Activated naive CD4-positive, alpha-beta T cell treated with anti-CD3 and anti-CD28 coated beads for 36 hours (primary cell): ENCODE measurements at regions of chr3 and their contacts with region 1.

Region 1: GRCh38 chr3:42443819-42444436 is 33.5 kb upstream of the LYZL4 start:
- DNase-seq: peak; percentile 89
- H3K4me3 Mint-ChIP-seq: no peak overlapping the region
- H3K27ac Mint-ChIP-seq: no peak overlapping the region
- H3K4me1 Mint-ChIP-seq: no peaks in the 10 kb centered on the region
- H3K27me3 Mint-ChIP-seq: no peaks in the 10 kb centered on the region

Region 2: GRCh38 chr3:41893977-41894376 is 550.0 kb before region 1 on chr3:
- CTCF ChIA-PET with region 1: no interaction called
- intact Hi-C with region 1: loop called (anchors 10 kb)
- DNase-seq: peak; percentile 23
- H3K4me3 Mint-ChIP-seq: no peak overlapping the region
- H3K27ac Mint-ChIP-seq: no peak overlapping the region
- H3K4me1 Mint-ChIP-seq: no peaks in the 10 kb centered on the region
- H3K27me3 Mint-ChIP-seq: no peaks in the 10 kb centered on the region

Region 3: GRCh38 chr3:42247576-42248027 is 196.3 kb before region 1 on chr3:
- CTCF ChIA-PET with region 1: interaction called, 104 read pairs
- intact Hi-C with region 1: loop called (anchors 1 kb)
- DNase-seq: peak; percentile 82
- H3K4me3 Mint-ChIP-seq: no peak overlapping the region
- H3K27ac Mint-ChIP-seq: no peak overlapping the region
- H3K4me1 Mint-ChIP-seq: peaks cover 8% of the 10 kb centered on the region
- H3K27me3 Mint-ChIP-seq: peaks cover 8% of the 10 kb centered on the region

Region 4: GRCh38 chr3:42302924-42303634 is 140.8 kb before region 1 on chr3:
- CTCF ChIA-PET with region 1: interaction called, 10 read pairs
- intact Hi-C with region 1: no loop called
- DNase-seq: no peak
- H3K4me3 Mint-ChIP-seq: no peak overlapping the region
- H3K27ac Mint-ChIP-seq: no peak overlapping the region
- H3K4me1 Mint-ChIP-seq: peaks cover 10% of the 10 kb centered on the region
- H3K27me3 Mint-ChIP-seq: peaks cover 5% of the 10 kb centered on the region

Region 5: GRCh38 chr3:42387802-42388651 is 55.9 kb before region 1 on chr3:
- CTCF ChIA-PET with region 1: interaction called, 9 read pairs
- intact Hi-C with region 1: loop called (anchors 1 kb)
- DNase-seq: peak; percentile 75
- H3K4me3 Mint-ChIP-seq: peak overlapping the region; percentile 44
- H3K27ac Mint-ChIP-seq: peak overlapping the region; percentile 96
- H3K4me1 Mint-ChIP-seq: peaks cover 25% of the 10 kb centered on the region
- H3K27me3 Mint-ChIP-seq: no peaks in the 10 kb centered on the region

Region 6: DNA sequence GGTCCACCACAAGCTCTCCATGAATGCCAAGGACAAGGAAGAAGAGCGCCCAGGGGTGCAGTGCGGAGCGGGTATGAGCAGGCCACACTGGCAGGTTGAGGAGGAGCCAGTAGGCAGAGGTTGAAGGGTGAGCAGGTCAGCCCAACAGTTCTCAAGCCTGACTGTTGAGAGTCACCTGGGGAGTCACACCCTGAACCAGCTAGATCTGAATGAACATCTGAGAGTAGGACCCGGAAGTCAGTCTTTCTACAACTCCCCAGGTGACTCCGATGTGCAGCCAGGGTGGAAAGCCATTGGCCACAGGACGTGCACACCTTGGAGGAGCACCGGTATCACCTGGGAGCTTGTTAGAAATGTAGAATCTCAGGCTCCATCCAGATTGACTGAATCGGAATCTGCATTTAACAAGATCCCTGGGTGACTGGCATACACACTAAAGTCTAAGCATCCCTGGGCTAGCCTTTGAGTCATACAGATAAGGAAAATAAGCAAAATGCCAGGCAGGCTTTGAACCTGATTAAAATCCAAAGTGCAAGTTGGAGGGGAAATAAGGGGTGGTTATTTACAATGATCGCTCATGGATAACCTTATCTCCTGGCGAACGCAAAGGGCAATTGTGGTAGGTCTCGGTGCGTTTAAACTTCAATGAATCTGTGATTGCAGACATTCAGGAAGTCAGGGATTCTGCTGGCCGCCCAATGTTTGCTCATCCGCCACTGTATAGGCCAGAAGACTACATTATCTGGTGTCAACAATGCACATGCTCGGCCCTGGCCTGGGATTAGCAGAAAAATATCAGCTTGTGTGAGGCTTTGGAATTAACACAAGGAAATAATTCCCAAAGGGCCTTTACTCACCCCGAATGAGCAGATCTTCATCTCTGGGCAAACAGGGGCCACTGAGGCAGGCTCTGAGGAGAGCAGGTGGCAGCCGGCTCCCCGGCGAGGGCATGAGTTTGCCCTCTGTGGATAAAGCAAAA is 21.8 kb before region 1 on chr3:
- CTCF ChIA-PET with region 1: interaction called, 12 read pairs
- intact Hi-C with region 1: no loop called
- DNase-seq: no peak
- H3K4me3 Mint-ChIP-seq: no peak overlapping the region
- H3K27ac Mint-ChIP-seq: no peak overlapping the region
- H3K4me1 Mint-ChIP-seq: no peaks in the 10 kb centered on the region
- H3K27me3 Mint-ChIP-seq: no peaks in the 10 kb centered on the region

Region 7: GRCh38 chr3:42539869-42540714 is 96.2 kb after region 1 on chr3:
- CTCF ChIA-PET with region 1: interaction called, 3 read pairs
- intact Hi-C with region 1: loop called (anchors 2 kb)
- DNase-seq: peak; percentile 78
- H3K4me3 Mint-ChIP-seq: no peak overlapping the region
- H3K27ac Mint-ChIP-seq: no peak overlapping the region
- H3K4me1 Mint-ChIP-seq: peaks cover 5% of the 10 kb centered on the region
- H3K27me3 Mint-ChIP-seq: no peaks in the 10 kb centered on the region